Calu3 (cell line): ENCODE measurements at regions of chr1 and their contacts with region 1.

Region 1: GRCh38 chr1:246012341-246012740 is 494.7 kb downstream of the SMYD3 start:
- DNase-seq: peak; percentile 17
- H3K4me3 Mint-ChIP-seq: no peak overlapping the region
- H3K27ac Mint-ChIP-seq: no peak overlapping the region
- H3K4me1 Mint-ChIP-seq: no peaks in the 10 kb centered on the region
- H3K27me3 Mint-ChIP-seq: no peaks in the 10 kb centered on the region
- CTCF ChIP-seq: peak; percentile 55

Region 2: GRCh38 chr1:246280551-246280950 is 268.2 kb after region 1 on chr1:
- CTCF ChIA-PET with region 1: no interaction called
- intact Hi-C with region 1: loop called (anchors 1 kb)
- DNase-seq: peak; percentile 7
- H3K4me3 Mint-ChIP-seq: no peak overlapping the region
- H3K27ac Mint-ChIP-seq: no peak overlapping the region
- H3K4me1 Mint-ChIP-seq: no peaks in the 10 kb centered on the region
- H3K27me3 Mint-ChIP-seq: no peaks in the 10 kb centered on the region
- CTCF ChIP-seq: no peak